ENCODE measurements at regions of chr10 and their contacts with region 1.

Region 1: DNA sequence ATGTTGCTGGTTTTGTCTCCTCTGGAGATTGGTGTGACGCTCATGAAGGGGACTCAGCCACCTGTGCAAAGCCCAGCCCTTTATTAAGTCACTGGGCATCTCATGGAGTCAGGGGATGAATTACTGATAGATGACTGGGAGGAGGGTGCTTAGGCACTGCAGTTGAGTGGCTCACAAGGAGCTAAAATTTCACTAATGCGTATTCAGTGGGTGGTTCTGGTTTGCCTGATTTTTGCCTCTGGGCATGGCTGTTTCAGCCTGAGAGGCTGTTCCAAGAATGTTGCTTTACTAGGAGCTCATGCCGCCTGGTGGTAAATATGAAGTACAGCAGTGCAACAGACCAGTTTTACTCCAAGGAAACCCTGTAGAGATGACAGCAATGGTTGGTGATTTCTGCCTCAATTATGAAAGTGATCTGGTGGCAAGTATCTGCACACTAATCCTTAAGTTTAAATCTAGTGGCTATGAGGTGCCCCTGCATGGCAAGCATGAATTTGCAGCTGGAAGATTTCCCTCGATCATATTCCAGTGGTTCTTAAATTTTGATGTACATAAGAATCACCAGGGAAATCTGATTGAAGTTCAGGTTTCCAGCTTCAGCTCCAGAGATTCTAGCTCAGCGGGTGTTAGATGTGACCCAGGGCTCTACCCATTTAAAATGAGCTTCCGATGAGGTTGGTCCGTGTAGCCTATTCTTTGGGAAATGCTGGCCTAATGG is 19.9 kb downstream of the ACTA2 start:
- DNase-seq: no peak
- ATAC-seq: peak; percentile 76
- H3K4me3 Mint-ChIP-seq: no peak overlapping the region
- H3K27ac Mint-ChIP-seq: peak overlapping the region; percentile 64
- H3K4me1 Mint-ChIP-seq: peaks cover 32% of the 10 kb centered on the region
- H3K27me3 Mint-ChIP-seq: no peaks in the 10 kb centered on the region
- CTCF ChIP-seq: peak; percentile 86

Region 2: GRCh38 chr10:88565072-88565471 is 367.6 kb before region 1 on chr10:
- CTCF ChIA-PET with region 1: interaction called, 6 read pairs
- POLR2A ChIA-PET with region 1: no interaction called
- intact Hi-C with region 1: loop called (anchors 5 kb)
- DNase-seq: no peak
- ATAC-seq: peak; percentile 28
- H3K4me3 Mint-ChIP-seq: no peak overlapping the region
- H3K27ac Mint-ChIP-seq: no peak overlapping the region
- H3K4me1 Mint-ChIP-seq: peaks cover 4% of the 10 kb centered on the region
- H3K27me3 Mint-ChIP-seq: no peaks in the 10 kb centered on the region
- CTCF ChIP-seq: no peak

Region 3: GRCh38 chr10:88843171-88843570 is 89.5 kb before region 1 on chr10:
- CTCF ChIA-PET with region 1: interaction called, 449 read pairs
- POLR2A ChIA-PET with region 1: interaction called, 4 read pairs
- intact Hi-C with region 1: no loop called
- DNase-seq: no peak
- ATAC-seq: no peak
- H3K4me3 Mint-ChIP-seq: no peak overlapping the region
- H3K27ac Mint-ChIP-seq: no peak overlapping the region
- H3K4me1 Mint-ChIP-seq: no peaks in the 10 kb centered on the region
- H3K27me3 Mint-ChIP-seq: no peaks in the 10 kb centered on the region
- CTCF ChIP-seq: no peak

Region 4: DNA sequence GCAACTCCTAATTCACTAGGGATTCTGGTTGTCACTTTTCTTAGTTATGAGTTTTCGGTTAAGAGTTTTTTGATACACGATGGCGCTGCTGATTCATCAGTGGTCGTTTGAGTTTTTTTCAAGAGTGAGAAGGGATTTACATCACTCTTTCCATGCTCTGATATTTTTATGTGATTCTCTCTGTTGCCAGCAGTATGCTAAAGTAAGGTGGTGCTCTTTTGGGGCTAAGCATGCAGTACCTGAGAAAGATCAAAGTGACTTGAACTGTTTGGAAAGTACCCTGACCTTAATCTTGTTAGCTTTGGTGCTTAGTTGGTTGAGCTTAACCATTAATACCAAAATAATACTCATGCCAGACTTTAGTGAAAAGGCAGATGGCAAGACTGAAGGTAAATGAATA is 24.5 kb before region 1 on chr10:
- CTCF ChIA-PET with region 1: interaction called, 44 read pairs
- POLR2A ChIA-PET with region 1: no interaction called
- intact Hi-C with region 1: no loop called
- DNase-seq: no peak
- ATAC-seq: no peak
- H3K4me3 Mint-ChIP-seq: no peak overlapping the region
- H3K27ac Mint-ChIP-seq: no peak overlapping the region
- H3K4me1 Mint-ChIP-seq: peaks cover 4% of the 10 kb centered on the region
- H3K27me3 Mint-ChIP-seq: no peaks in the 10 kb centered on the region
- CTCF ChIP-seq: no peak

Region 5: DNA sequence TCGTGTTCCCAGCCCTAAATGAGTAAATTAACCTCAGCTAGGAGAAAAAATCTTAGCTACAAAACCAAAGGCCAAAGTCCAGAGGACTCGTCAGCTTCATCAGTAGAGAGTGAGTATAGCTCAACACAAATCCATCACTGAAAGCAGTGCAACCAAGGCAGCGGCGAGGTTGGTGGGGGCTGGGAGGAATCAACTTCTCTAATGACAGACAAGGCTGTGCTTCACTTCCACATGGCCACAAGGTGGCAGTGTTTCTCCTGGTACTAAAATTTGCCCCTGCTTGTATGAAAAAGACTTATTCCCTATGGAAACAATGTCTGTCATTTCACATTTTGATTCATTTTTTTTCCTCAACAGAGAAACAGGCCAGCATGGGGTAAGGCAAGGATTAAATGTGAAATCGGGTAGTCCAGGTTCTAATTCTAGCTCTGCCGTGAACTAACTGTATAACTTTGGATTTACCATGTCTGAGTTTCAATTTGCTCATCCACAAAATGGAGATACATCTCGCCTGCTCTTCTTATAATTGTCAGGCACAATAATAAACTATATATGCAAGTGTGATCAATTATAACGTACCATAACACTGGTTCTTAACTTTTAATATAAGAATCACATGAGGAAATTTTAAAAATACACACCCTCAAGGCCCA is 97.2 kb after region 1 on chr10:
- CTCF ChIA-PET with region 1: interaction called, 30 read pairs
- POLR2A ChIA-PET with region 1: no interaction called
- intact Hi-C with region 1: loop called (anchors 1 kb)
- DNase-seq: peak; percentile 22
- ATAC-seq: peak; percentile 82
- H3K4me3 Mint-ChIP-seq: no peak overlapping the region
- H3K27ac Mint-ChIP-seq: no peak overlapping the region
- H3K4me1 Mint-ChIP-seq: peaks cover 15% of the 10 kb centered on the region
- H3K27me3 Mint-ChIP-seq: no peaks in the 10 kb centered on the region
- CTCF ChIP-seq: peak; percentile 70

Region 6: DNA sequence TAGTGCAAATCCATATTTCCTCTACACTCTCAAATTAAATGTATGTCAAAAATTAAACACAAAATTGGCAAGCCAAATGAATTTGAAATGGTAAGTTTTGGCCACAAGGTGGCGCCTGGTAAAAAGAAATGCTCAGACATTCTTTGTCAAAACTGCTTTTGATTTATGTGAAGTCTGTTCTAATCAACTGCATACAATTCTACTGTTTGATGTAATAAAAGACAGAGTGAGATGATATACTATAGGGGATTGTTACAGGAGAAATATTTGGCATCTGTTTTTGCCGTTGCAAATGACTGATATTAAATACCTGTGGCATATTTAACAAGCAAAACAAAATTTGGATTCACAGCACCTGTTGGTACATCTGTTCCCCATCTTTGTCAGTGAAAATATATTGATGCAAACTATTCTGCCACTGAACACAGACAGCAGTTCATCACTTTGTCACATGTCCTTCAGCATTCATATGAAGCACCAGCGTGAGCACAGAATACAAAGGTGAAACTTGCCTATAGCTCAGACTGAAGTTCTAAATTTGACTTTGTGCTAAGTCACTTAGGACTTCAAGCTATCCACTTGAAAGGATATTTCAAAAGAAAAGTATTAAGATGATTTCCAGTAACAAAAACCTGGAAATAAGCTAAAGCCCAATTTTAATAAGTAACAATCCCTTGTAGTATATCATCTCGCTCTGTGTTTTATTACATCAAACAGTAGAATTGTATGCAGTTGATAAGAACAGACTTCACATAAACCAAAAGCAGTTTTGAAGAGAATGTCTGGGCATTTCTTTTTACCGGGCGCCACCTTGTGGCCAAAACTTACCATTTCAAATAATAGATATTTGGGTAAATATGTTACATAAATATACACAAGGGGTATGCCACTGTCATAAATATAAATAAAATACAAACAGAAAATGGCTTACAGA is 284.6 kb after region 1 on chr10:
- CTCF ChIA-PET with region 1: interaction called, 99 read pairs
- POLR2A ChIA-PET with region 1: interaction called, 3 read pairs
- intact Hi-C with region 1: loop called (anchors 1 kb)
- DNase-seq: peak; percentile 20
- ATAC-seq: peak; percentile 49
- H3K4me3 Mint-ChIP-seq: no peak overlapping the region
- H3K27ac Mint-ChIP-seq: no peak overlapping the region
- H3K4me1 Mint-ChIP-seq: peaks cover 10% of the 10 kb centered on the region
- H3K27me3 Mint-ChIP-seq: peaks cover 2% of the 10 kb centered on the region
- CTCF ChIP-seq: no peak

Measured in activated B cell treated with CpG ODN at 0.5 μM for 24 hours (primary cell).